ENCODE measurements at regions of chr20 and their contacts with region 1.

Region 1: GRCh38 chr20:24469116-24469893 is at the start of gene SYNDIG1:
- DNase-seq: peak in 1 of 5 donors; percentile 31
- H3K4me3 ChIP-seq: peak within 1 kb of the TSS; percentile 39
- H3K27ac ChIP-seq: no peak within 1 kb of the TSS
- H3K4me1 ChIP-seq: peaks cover 5% of the 10 kb centered on the region
- H3K27me3 ChIP-seq: no peaks in the 10 kb centered on the region
- CTCF ChIP-seq: no peak
- EP300 ChIP-seq: no peak
- POLR2A ChIP-seq: no peak
- total RNA-seq, gene SYNDIG1: 0.10 to 6.8 (median 1.1) TPM in 6 of 7 donors, not detected in the other

Region 2: GRCh38 chr20:24545168-24545567 is 75.9 kb after region 1 on chr20:
- intact Hi-C with region 1: loop called in 1 of 4 experiments (anchors 10 kb)
- DNase-seq: no peak
- H3K4me3 ChIP-seq: no peak overlapping the region
- H3K27ac ChIP-seq: no peak overlapping the region
- H3K4me1 ChIP-seq: no peaks in the 10 kb centered on the region
- H3K27me3 ChIP-seq: no peaks in the 10 kb centered on the region
- CTCF ChIP-seq: no peak
- EP300 ChIP-seq: no peak
- POLR2A ChIP-seq: no peak

Region 3: GRCh38 chr20:24842918-24843715 is 373.8 kb after region 1 on chr20:
- intact Hi-C with region 1: loop called in 1 of 4 experiments (anchors 10 kb)
- DNase-seq: no peak
- H3K4me3 ChIP-seq: no peak overlapping the region
- H3K27ac ChIP-seq: no peak overlapping the region
- H3K4me1 ChIP-seq: no peaks in the 10 kb centered on the region
- H3K27me3 ChIP-seq: no peaks in the 10 kb centered on the region
- CTCF ChIP-seq: no peak
- EP300 ChIP-seq: no peak
- POLR2A ChIP-seq: no peak